ENCODE measurements at regions of chr6 and their contacts with region 1.

Region 1: GRCh38 chr6:149840345-149841075 is 23.6 kb downstream of the LRP11 start:
- DNase-seq: peak; percentile 72
- H3K4me3 ChIP-seq: no peak overlapping the region
- H3K27ac ChIP-seq: no peak overlapping the region
- H3K4me1 ChIP-seq: no peaks in the 10 kb centered on the region
- CTCF ChIP-seq: peak; percentile 91

Region 2: DNA sequence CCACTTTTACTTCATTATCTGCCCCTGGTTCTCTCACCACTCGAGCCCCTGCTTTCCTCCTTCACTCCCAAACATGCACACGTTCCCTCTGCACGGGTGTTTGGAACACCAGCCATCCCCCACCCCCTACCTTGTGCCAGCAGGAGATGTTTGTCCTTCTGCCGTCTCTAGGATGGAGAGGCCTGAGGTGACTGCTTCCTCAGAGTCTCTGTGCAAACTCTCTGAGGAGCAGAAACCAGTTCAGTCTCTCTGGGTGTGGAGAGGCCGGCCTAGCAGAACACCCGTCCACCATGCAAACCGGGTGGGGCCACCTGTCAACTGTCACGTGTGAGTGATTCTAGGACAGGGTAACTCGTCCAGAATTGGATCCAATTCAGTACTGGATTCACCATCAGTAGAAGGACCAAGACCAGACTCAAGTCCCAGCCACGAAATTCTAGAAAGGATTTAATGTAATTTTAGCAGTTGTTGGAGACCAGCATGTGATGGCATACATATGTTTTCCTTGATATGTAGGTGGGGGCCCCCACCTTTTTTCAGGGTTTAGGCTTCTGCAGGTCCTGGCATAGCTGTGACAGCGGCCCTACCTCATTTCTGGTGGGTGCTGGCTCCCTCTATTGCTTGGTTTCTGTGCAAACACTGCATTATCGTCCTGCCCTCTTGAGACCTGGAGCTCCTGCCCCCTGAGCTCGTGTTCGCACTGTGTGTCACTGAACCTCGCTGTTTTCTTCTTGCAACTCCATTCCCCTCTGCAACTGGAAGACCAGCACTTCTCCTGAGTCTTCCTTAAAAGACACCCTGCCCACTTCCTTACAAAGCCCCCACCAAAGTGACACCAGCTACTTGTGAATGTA is 57.6 kb after region 1 on chr6 and contains the start of gene RAET1E:
- CTCF ChIA-PET with region 1: no interaction called
- POLR2A ChIA-PET with region 1: no interaction called
- intact Hi-C with region 1: loop called (anchors 1 kb)
- DNase-seq: peak; percentile 35
- H3K4me3 ChIP-seq: no peak within 1 kb of the TSS
- H3K27ac ChIP-seq: no peak within 1 kb of the TSS
- H3K4me1 ChIP-seq: no peaks in the 10 kb centered on the region
- CTCF ChIP-seq: peak; percentile 62
- total RNA-seq, gene RAET1E: not detected in 2 replicates

Region 3: DNA sequence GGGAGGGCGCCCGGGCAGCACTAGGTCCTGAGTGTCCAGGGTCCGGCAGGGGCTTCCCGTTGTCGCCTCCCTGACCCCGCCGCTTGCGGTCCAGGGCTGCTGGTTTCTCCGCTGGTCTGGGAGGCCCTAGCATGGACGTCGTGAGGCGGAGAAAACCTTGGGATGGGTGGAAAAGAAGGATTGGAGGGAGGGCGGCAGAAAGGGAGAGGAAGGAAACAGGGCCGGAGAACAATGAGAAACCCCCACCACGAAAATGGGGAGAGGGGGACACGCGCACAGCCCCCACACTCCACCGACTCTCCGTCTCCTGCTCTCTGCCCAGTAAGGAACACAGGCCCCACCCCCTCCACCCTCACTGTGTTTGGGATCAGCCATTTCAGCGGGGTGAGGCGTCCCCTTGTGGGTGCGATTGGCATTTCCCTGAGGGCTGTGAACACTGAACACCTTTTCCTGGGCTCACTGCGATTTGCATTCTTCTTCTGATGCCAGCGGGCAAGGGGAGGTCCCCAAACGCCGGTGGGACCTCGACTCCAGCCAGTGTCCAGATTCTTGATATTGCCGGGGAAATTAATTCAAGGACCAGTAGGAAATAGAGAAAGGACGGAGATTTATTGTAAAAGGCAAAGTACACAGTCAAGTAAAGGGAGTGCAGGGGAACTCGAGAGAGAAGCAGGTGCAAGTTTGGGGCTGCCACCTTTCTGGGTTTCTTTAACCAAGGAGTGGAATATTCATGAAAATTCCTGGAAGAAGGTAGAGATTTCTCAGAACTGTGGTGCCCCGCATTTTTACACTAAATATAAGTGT is 85.7 kb after region 1 on chr6:
- CTCF ChIA-PET with region 1: interaction called, 4 read pairs
- POLR2A ChIA-PET with region 1: no interaction called
- intact Hi-C with region 1: loop called (anchors 1 kb)
- DNase-seq: peak; percentile 75
- H3K4me3 ChIP-seq: peak overlapping the region; percentile 22
- H3K27ac ChIP-seq: no peak overlapping the region
- H3K4me1 ChIP-seq: peaks cover 11% of the 10 kb centered on the region
- CTCF ChIP-seq: peak; percentile 83

Region 4: GRCh38 chr6:150016324-150017185 is 176.0 kb after region 1 on chr6:
- CTCF ChIA-PET with region 1: no interaction called
- POLR2A ChIA-PET with region 1: no interaction called
- intact Hi-C with region 1: loop called (anchors 2 kb)
- DNase-seq: peak; percentile 76
- H3K4me3 ChIP-seq: no peak overlapping the region
- H3K27ac ChIP-seq: no peak overlapping the region
- H3K4me1 ChIP-seq: no peaks in the 10 kb centered on the region
- CTCF ChIP-seq: peak; percentile 79

Region 5: DNA sequence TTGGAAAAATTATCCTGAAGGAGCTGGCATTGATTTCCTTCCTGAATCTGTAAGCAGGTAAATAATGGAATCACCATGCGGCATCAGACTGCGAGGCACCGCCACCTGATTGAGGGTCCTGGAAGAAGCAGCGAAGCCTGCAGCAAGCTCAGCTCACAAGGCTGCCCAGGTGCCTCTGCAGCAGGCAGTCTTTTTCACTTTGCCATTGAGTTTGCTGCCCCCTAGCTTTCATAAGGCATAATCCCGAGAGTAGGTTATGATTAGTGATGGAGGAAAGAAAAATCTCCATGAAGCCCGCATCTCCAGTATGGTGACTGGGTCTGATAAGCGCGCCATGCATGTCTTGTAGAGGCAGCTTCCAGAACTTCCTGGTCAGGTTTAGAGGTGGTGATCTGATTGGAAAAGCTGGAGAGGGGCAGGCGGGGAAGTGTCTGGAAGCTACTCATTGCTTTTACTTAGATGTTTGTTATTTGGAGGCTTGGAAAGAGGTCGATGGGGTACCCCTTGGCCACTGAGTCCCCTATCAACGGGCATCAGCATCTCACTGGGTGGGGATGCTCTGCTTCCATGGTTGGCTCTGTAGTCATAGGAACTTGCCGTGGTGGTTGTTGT is 555.0 kb after region 1 on chr6:
- CTCF ChIA-PET with region 1: no interaction called
- POLR2A ChIA-PET with region 1: no interaction called
- intact Hi-C with region 1: no loop called
- DNase-seq: peak; percentile 82
- H3K4me3 ChIP-seq: no peak overlapping the region
- H3K27ac ChIP-seq: no peak overlapping the region
- H3K4me1 ChIP-seq: no peaks in the 10 kb centered on the region
- CTCF ChIP-seq: peak; percentile 91

Region 6: DNA sequence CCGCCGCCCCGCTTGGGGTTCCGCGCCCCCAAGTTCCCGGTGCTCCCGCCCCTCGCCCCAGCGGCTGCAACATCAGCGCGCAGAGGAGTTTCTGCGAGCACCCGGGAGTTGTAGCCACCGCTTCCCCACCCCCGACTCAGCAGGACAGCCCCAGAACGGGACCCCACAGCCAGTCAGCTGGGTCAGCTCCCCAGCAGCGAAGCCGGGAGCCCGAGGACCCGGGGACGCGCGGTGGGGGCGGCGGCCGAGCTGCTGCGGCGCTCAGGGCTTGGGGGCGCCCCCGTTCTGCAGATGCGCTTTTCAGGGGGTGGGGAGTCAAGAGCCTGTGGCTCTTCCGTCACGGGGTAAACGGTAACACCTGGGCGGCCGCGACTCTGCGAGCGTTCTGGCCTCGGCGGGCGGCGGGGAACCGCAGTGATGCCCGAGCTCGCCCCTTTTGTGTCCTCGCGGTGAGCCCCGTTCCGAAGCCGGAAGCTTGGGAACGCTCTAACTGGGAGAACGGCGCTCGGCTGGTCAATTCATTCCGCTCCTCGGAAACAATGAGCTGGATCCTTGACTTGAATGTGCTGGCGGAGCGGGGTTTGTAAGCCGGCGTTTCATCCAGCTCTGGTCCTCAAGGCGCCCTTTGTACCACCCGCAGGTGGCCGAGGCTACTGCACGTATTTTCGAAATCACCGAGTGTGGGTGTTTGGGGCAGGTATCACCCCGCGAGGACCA is 759.9 kb after region 1 on chr6:
- CTCF ChIA-PET with region 1: no interaction called
- POLR2A ChIA-PET with region 1: no interaction called
- intact Hi-C with region 1: no loop called
- DNase-seq: peak; percentile 92
- H3K4me3 ChIP-seq: peak overlapping the region; percentile 78
- H3K27ac ChIP-seq: peak overlapping the region; percentile 69
- H3K4me1 ChIP-seq: peaks cover 44% of the 10 kb centered on the region
- CTCF ChIP-seq: peak; percentile 74

Measured in OCI-LY7 (cell line).